ENCODE measurements at regions of chr1 and their contacts with region 1.

Region 1: GRCh38 chr1:206663832-206664652 is 20.7 kb upstream of the MAPKAPK2 start:
- DNase-seq: peak; percentile 52
- H3K4me3 Mint-ChIP-seq: peak overlapping the region; percentile 71
- H3K27ac Mint-ChIP-seq: peak overlapping the region; percentile 11
- H3K4me1 Mint-ChIP-seq: peaks cover 39% of the 10 kb centered on the region
- H3K27me3 Mint-ChIP-seq: no peaks in the 10 kb centered on the region

Region 2: GRCh38 chr1:206445116-206445515 is 218.9 kb before region 1 on chr1:
- intact Hi-C with region 1: no loop called
- DNase-seq: no peak
- H3K4me3 Mint-ChIP-seq: no peak overlapping the region
- H3K27ac Mint-ChIP-seq: no peak overlapping the region
- H3K4me1 Mint-ChIP-seq: peaks cover 20% of the 10 kb centered on the region
- H3K27me3 Mint-ChIP-seq: no peaks in the 10 kb centered on the region

Region 3: GRCh38 chr1:206544562-206545257 is 119.3 kb before region 1 on chr1:
- intact Hi-C with region 1: loop called (anchors 2 kb)
- DNase-seq: peak; percentile 69
- H3K4me3 Mint-ChIP-seq: no peak overlapping the region
- H3K27ac Mint-ChIP-seq: peak overlapping the region; percentile 22
- H3K4me1 Mint-ChIP-seq: peaks cover 33% of the 10 kb centered on the region
- H3K27me3 Mint-ChIP-seq: peaks cover 2% of the 10 kb centered on the region

Region 4: GRCh38 chr1:206635080-206635977 is 28.7 kb before region 1 on chr1 and contains the start of gene DYRK3:
- intact Hi-C with region 1: loop called (anchors 1 kb)
- DNase-seq: peak; percentile 95
- H3K4me3 Mint-ChIP-seq: peak within 1 kb of the TSS; percentile 89
- H3K27ac Mint-ChIP-seq: peak within 1 kb of the TSS; percentile 95
- H3K4me1 Mint-ChIP-seq: peaks cover 38% of the 10 kb centered on the region
- H3K27me3 Mint-ChIP-seq: peaks cover 7% of the 10 kb centered on the region
- total RNA-seq, gene DYRK3: 22.1 and 23.3 TPM in 2 replicates

Region 5: DNA sequence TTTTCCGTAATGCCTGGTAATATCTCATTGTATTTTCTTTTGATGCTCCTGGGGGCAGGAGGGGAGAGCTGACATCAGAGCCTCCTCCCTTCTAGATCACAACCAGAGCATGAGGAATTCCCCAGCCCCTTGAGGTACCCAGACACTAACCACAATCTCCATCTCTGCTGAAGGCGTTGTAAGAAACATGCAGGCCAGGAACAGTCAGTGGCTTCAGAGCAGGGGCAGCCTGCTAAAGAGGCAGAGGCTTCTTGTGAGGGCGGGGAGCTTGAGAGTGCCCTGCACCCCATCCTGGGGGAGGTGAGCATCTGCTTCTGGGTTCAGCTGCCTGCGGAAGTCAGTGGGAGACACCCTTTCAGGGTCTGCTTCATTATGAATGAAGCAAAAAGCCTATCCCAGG is 39.6 kb after region 1 on chr1:
- intact Hi-C with region 1: loop called (anchors 2 kb)
- DNase-seq: peak; percentile 69
- H3K4me3 Mint-ChIP-seq: peak overlapping the region; percentile 73
- H3K27ac Mint-ChIP-seq: peak overlapping the region; percentile 77
- H3K4me1 Mint-ChIP-seq: peaks cover 93% of the 10 kb centered on the region
- H3K27me3 Mint-ChIP-seq: no peaks in the 10 kb centered on the region

Region 6: DNA sequence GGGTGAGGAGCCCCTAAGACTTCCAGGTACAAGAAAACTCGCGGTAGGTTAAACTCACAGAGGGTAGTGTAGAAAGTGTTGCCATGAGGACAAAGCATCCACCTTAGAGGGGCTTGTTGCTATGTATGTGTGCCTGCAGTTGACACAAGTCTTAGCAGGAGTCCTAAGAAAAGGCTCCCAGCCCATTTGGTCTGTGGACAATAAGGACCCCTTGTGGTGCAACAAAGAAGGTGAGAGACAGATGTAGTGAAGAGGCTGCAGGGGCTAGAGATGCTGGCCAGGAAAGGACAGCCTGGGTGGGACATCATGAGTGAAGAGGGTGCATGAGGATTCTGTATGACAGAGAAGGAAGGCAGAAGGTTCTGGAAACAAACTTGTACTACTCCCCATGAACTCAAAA is 144.6 kb after region 1 on chr1:
- intact Hi-C with region 1: loop called (anchors 1 kb)
- DNase-seq: peak; percentile 43
- H3K4me3 Mint-ChIP-seq: no peak overlapping the region
- H3K27ac Mint-ChIP-seq: peak overlapping the region; percentile 15
- H3K4me1 Mint-ChIP-seq: peaks cover 57% of the 10 kb centered on the region
- H3K27me3 Mint-ChIP-seq: peaks cover 13% of the 10 kb centered on the region

Measured in activated T-helper 1 cell treated with anti-CD3 and anti-CD28 coated beads, Interleukin-12 subunit alpha, Interleukin-12 subunit beta, Interleukin-2, Interleukin-4 antibody, amounts not matched to agents 30 ng/mL and 10 ng/mL and 1 ng/mL, durations not matched to agents 14 hours and 24 hours and 36 hours (primary cell).